Aorta (tissue), 5 donors: ENCODE measurements at regions of chr18 and their contacts with region 1.

Region 1: DNA sequence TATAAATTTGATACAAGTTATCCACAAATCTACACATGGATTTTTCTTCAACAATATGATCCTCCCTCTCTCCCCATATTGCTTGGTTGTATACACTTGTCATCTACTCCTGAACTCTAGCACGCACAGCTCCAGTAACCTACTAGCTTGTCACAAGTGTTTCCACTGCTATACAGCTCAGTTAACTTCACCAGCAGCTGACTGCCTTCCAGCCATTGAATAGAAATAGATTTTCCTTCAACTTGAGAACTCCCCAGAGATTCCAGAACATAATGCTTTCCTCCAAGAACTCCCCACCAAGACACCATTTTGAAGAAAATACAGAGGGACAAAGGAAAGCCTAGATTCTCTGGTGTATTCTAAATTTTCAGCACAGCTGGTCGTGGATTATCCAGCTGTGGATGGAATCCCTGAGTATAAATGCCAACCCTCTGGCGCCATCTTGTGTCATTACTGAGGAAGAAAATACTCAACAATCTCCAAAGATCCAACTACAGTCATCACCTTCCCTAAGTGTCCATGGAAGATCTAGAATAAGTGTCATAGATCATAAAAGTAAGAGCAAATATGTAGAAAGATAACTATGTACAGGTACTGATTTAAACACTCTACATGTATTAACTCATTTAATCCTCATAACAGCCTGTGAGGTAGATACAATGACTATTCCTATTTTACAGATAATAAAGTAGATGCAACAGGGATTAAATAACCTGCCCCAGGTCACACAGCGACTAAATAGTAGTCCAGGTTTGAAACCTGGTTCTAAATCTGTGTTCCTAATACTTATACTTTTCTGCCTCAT is 156.7 kb downstream of the ARHGAP28 start:
- DNase-seq: no peak
- ATAC-seq: peak; percentile 77
- H3K4me3 ChIP-seq: no peak overlapping the region
- H3K27ac ChIP-seq: no peak overlapping the region
- H3K4me1 ChIP-seq: no peaks in the 10 kb centered on the region
- H3K27me3 ChIP-seq: no peaks in the 10 kb centered on the region

Region 2: GRCh38 chr18:6546229-6546628 is 340.0 kb before region 1 on chr18:
- intact Hi-C with region 1: loop called in 1 of 2 experiments (anchors 5 kb)
- DNase-seq: no peak
- ATAC-seq: no peak
- H3K4me3 ChIP-seq: no peak overlapping the region
- H3K27ac ChIP-seq: no peak overlapping the region
- H3K4me1 ChIP-seq: no peaks in the 10 kb centered on the region
- H3K27me3 ChIP-seq: no peaks in the 10 kb centered on the region

Region 3: DNA sequence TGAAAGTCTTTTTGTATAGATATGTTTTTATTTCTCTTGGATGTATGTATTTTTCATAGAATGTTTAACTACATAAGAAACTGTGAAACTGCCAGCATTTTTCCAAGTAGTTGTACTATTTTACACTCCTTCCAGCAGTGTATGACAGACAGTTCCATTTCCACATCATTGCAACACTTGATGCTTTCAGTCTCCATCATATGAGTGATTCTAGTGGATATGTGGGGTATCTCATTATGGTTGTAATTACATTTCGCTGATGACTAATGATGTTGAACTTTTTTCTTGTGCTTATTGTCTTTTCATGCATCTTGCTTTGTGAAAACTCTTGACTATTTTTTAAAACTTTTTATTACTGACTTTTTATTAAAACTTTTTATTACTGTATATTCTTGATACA is 55.3 kb before region 1 on chr18:
- intact Hi-C with region 1: no loop called
- DNase-seq: no peak
- ATAC-seq: no peak
- H3K4me3 ChIP-seq: no peak overlapping the region
- H3K27ac ChIP-seq: no peak overlapping the region
- H3K4me1 ChIP-seq: no peaks in the 10 kb centered on the region
- H3K27me3 ChIP-seq: no peaks in the 10 kb centered on the region